ENCODE measurements at regions of chr5 and their contacts with region 1.

Region 1: DNA sequence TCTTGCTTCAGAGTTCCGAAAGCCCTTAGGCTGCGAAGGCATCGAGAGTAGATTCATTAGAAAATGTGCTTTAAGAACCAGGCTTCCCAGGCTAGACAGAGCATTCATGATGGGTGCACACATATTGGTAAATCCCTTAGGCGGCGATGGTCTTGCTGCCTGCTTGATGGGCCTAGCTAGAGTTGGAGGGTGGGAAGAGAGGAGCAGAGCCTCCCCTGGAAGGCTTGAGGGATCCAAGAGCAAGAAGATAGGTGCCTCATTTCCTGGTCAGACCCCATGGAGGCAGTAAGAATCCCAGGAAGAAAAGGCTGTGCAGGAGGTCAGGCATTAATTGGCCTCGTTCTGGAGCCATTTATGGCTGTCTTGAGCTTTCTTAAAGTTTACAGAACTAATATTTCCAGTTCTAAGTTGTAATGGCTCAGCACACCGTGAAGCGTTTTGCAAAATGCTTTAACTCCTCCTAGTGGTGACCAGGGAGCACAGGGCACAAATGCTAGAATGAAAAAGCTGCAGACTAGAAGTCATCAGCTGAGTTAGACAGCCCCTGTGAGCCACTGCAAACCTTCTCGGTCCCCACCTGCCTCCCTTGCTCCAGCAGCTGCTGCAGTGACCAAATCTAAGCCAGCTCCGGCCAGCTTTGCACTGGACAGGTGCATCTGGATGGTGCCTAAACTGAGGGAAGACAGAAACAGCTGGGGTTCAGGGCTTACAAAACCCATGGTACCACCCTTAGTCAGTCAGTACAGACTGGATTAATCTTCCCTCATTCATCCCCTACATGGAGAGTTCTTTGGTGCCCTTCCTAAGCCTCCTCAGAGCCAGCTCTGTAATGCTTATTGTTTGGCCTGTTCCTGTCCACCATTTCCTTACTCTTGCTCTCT is 14.7 kb downstream of the SLC45A2 start:
- DNase-seq: peak in 4 of 9 donors; percentile 8 to 30 (median 15)
- ATAC-seq: peak; percentile 49
- H3K4me3 ChIP-seq: no peak overlapping the region
- H3K4me3 Mint-ChIP-seq: no peak overlapping the region
- H3K27ac ChIP-seq: no peak overlapping the region
- H3K27ac Mint-ChIP-seq: no peak overlapping the region
- H3K4me1 ChIP-seq: peaks cover 0 to 5% of the 10 kb centered on the region in 2 donors
- H3K4me1 Mint-ChIP-seq: peaks cover 4 to 22% (median 16%) of the 10 kb centered on the region in 7 donors
- H3K27me3 ChIP-seq: no peaks in the 10 kb centered on the region
- H3K27me3 Mint-ChIP-seq: no peaks in the 10 kb centered on the region

Region 2: GRCh38 chr5:33470544-33470943 is 499.3 kb before region 1 on chr5:
- CTCF ChIA-PET with region 1: interaction called, 6 read pairs
- POLR2A ChIA-PET with region 1: no interaction called
- intact Hi-C with region 1: loop called in 1 of 2 experiments (anchors 1 kb)
- DNase-seq: peak in 2 of 9 donors; percentile 2
- ATAC-seq: no peak
- H3K4me3 ChIP-seq: no peak overlapping the region
- H3K4me3 Mint-ChIP-seq: no peak overlapping the region
- H3K27ac ChIP-seq: no peak overlapping the region
- H3K27ac Mint-ChIP-seq: no peak overlapping the region
- H3K4me1 ChIP-seq: no peaks in the 10 kb centered on the region
- H3K4me1 Mint-ChIP-seq: peaks cover 0 to 1% (median 0%) of the 10 kb centered on the region in 7 donors
- H3K27me3 ChIP-seq: no peaks in the 10 kb centered on the region
- H3K27me3 Mint-ChIP-seq: no peaks in the 10 kb centered on the region

Region 3: GRCh38 chr5:33588654-33589372 is 381.0 kb before region 1 on chr5:
- CTCF ChIA-PET with region 1: interaction called, 4 read pairs
- POLR2A ChIA-PET with region 1: no interaction called
- intact Hi-C with region 1: loop called in 1 of 2 experiments (anchors 2 kb)
- DNase-seq: peak in 8 of 9 donors; percentile 0 to 40 (median 10)
- ATAC-seq: no peak
- H3K4me3 ChIP-seq: no peak overlapping the region
- H3K4me3 Mint-ChIP-seq: no peak overlapping the region
- H3K27ac ChIP-seq: no peak overlapping the region
- H3K27ac Mint-ChIP-seq: no peak overlapping the region
- H3K4me1 ChIP-seq: no peaks in the 10 kb centered on the region
- H3K4me1 Mint-ChIP-seq: peaks cover 0 to 1% (median 0%) of the 10 kb centered on the region in 7 donors
- H3K27me3 ChIP-seq: no peaks in the 10 kb centered on the region
- H3K27me3 Mint-ChIP-seq: peaks cover 0 to 5% (median 4%) of the 10 kb centered on the region in 5 donors

Region 4: DNA sequence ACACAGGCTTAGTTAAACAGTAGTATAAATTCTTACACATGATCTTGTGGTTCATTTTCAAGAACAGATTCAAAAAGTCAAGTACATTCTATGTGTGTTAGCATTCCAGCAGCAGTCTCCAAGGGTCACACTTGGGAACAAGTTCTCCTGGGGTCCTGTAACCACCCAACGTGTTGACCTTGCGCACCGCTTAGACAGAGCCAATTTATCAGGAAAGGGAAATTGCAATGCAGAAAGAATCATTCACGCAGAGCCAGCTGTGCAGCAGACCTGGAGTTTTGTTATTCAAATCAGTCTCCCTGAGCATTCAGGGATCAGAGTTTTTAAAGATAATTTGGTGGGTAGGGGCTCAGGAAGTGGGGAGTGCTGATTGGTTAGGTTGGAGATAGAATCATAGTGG is 42.1 kb before region 1 on chr5:
- CTCF ChIA-PET with region 1: no interaction called
- POLR2A ChIA-PET with region 1: no interaction called
- intact Hi-C with region 1: no loop called
- DNase-seq: no peak
- ATAC-seq: no peak
- H3K4me3 ChIP-seq: no peak overlapping the region
- H3K4me3 Mint-ChIP-seq: no peak overlapping the region
- H3K27ac ChIP-seq: no peak overlapping the region
- H3K27ac Mint-ChIP-seq: no peak overlapping the region
- H3K4me1 ChIP-seq: no peaks in the 10 kb centered on the region
- H3K4me1 Mint-ChIP-seq: no peaks in the 10 kb centered on the region
- H3K27me3 ChIP-seq: no peaks in the 10 kb centered on the region
- H3K27me3 Mint-ChIP-seq: peaks cover 8 to 22% (median 14%) of the 10 kb centered on the region in 5 donors

Measured in naive thymus-derived CD4-positive, alpha-beta T cell (primary cell).